BJ (cell line): ENCODE measurements at regions of chr17 and their contacts with region 1.

Region 1: GRCh38 chr17:68398691-68399637 is 58.3 kb downstream of the WIPI1 start:
- DNase-seq: no peak
- H3K4me3 ChIP-seq: no peak overlapping the region
- H3K27me3 ChIP-seq: no peaks in the 10 kb centered on the region
- CTCF ChIP-seq: peak; percentile 89

Region 2: DNA sequence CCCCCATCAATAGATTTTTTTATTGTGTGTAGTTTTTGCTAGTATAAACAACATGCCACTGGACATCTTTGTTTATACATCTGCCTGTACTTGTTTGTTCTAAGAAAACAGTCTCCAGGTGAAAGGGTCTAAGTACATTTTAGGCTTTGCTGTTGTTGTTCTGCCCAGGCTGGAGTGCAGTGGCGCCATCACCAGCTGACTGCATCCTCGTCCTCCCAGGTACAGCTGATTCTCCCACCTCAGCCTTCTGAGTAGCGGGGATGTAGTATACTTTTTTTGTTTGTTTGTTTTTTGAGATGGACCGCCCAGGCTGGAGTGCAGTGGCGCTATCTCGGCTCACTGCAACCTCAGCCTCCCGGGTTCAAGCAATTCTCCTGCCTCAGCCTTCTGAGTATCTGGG is 428.1 kb before region 1 on chr17:
- CTCF ChIA-PET with region 1: no interaction called
- POLR2A ChIA-PET with region 1: no interaction called
- DNase-seq: no peak
- H3K4me3 ChIP-seq: no peak overlapping the region
- H3K27me3 ChIP-seq: no peaks in the 10 kb centered on the region
- CTCF ChIP-seq: no peak

Region 3: GRCh38 chr17:67992588-67993152 is 406.3 kb before region 1 on chr17:
- CTCF ChIA-PET with region 1: no interaction called
- POLR2A ChIA-PET with region 1: no interaction called
- DNase-seq: no peak
- H3K4me3 ChIP-seq: peak overlapping the region; percentile 70
- H3K27me3 ChIP-seq: no peaks in the 10 kb centered on the region
- CTCF ChIP-seq: no peak

Region 4: GRCh38 chr17:68260051-68260762 is 138.8 kb before region 1 on chr17:
- CTCF ChIA-PET with region 1: interaction called, 92 read pairs
- POLR2A ChIA-PET with region 1: no interaction called
- DNase-seq: no peak
- H3K4me3 ChIP-seq: no peak overlapping the region
- H3K27me3 ChIP-seq: no peaks in the 10 kb centered on the region
- CTCF ChIP-seq: no peak

Region 5: GRCh38 chr17:68339561-68339960 is 59.4 kb before region 1 on chr17:
- CTCF ChIA-PET with region 1: interaction called, 12 read pairs
- POLR2A ChIA-PET with region 1: no interaction called
- DNase-seq: no peak
- H3K4me3 ChIP-seq: no peak overlapping the region
- H3K27me3 ChIP-seq: no peaks in the 10 kb centered on the region
- CTCF ChIP-seq: no peak

Region 6: GRCh38 chr17:68381076-68381900 is 17.7 kb before region 1 on chr17:
- CTCF ChIA-PET with region 1: interaction called, 63 read pairs
- POLR2A ChIA-PET with region 1: no interaction called
- DNase-seq: peak; percentile 99
- H3K4me3 ChIP-seq: no peak overlapping the region
- H3K27me3 ChIP-seq: no peaks in the 10 kb centered on the region
- CTCF ChIP-seq: no peak